ENCODE measurements at regions of chr9 and their contacts with region 1.

Region 1: GRCh38 chr9:116482740-116483139 is 204.4 kb upstream of the TRIM32 start:
- DNase-seq: no peak
- H3K4me3 ChIP-seq: no peak overlapping the region
- H3K27ac ChIP-seq: no peak overlapping the region
- H3K4me1 ChIP-seq: no peaks in the 10 kb centered on the region
- H3K27me3 ChIP-seq: no peaks in the 10 kb centered on the region
- CTCF ChIP-seq: no peak

Region 2: GRCh38 chr9:116163293-116164055 is 319.3 kb before region 1 on chr9:
- intact Hi-C with region 1: loop called (anchors 10 kb)
- DNase-seq: no peak
- H3K4me3 ChIP-seq: no peak overlapping the region
- H3K27ac ChIP-seq: no peak overlapping the region
- H3K4me1 ChIP-seq: no peaks in the 10 kb centered on the region
- H3K27me3 ChIP-seq: no peaks in the 10 kb centered on the region
- CTCF ChIP-seq: peak; percentile 23

Measured in colonic mucosa (tissue), 4 donors.